ENCODE measurements at regions of chr16 and their contacts with region 1.

Region 1: GRCh38 chr16:55494994-55495421 is 13.9 kb upstream of the LPCAT2 start:
- DNase-seq: no peak
- H3K4me3 ChIP-seq: no peak overlapping the region
- H3K27ac ChIP-seq: no peak overlapping the region
- H3K4me1 ChIP-seq: peaks cover 15% of the 10 kb centered on the region
- H3K27me3 ChIP-seq: no peaks in the 10 kb centered on the region
- CTCF ChIP-seq: no peak; the same call in 1 of the 2 replicates

Region 2: DNA sequence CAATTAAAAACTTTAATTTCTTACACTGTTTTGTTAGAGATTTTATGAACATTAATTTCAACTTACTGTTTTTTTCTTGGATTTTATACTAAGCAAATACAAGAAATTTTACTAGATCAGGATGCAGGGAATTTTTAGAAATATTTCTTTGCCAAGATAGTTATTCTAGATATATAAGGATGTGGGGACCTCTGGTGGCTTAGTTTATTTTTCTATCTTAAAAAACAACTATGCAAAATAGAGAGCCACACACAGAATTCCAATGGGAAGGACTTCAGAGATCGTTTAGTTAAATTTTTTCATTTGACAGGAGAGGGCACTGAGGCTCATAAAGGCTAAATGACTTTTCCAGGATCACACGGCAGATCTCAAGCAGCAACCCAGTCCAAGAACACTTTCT is 48.5 kb after region 1 on chr16:
- CTCF ChIA-PET with region 1: no interaction called
- POLR2A ChIA-PET with region 1: no interaction called
- intact Hi-C with region 1: loop called (anchors 2 kb)
- DNase-seq: peak in 1 of 2 experiments; percentile 47
- H3K4me3 ChIP-seq: no peak overlapping the region
- H3K27ac ChIP-seq: no peak overlapping the region
- H3K4me1 ChIP-seq: peaks cover 10% of the 10 kb centered on the region; the same call in 1 of the 2 replicates
- H3K27me3 ChIP-seq: no peaks in the 10 kb centered on the region
- CTCF ChIP-seq: peak; percentile 74

Measured in PC-9 (cell line).